Motor neuron (in vitro differentiated cells): ENCODE measurements at regions of chr10 and their contacts with region 1.

Region 1: GRCh38 chr10:120950051-120950561 is 98.9 kb downstream of the WDR11 start:
- ATAC-seq: peak in 5 of 8 experiments; percentile 8 to 49 (median 31)
- H3K4me3 ChIP-seq: peak overlapping the region in 2 of 5 donors; percentile 4 to 14
- H3K27ac ChIP-seq: no peak overlapping the region
- H3K4me1 ChIP-seq: peaks cover 4 to 9% of the 10 kb centered on the region in 2 donors

Region 2: GRCh38 chr10:120572307-120572706 is 377.8 kb before region 1 on chr10:
- in situ Hi-C with region 1: no loop called
- ATAC-seq: peak in 3 of 8 experiments; percentile 34 to 82 (median 60)
- H3K4me3 ChIP-seq: no peak overlapping the region
- H3K27ac ChIP-seq: no peak overlapping the region
- H3K4me1 ChIP-seq: no peaks in the 10 kb centered on the region

Region 3: GRCh38 chr10:121734589-121735045 is 784.5 kb after region 1 on chr10:
- in situ Hi-C with region 1: loop called in 4 of 9 experiments (anchors 10 to 25 kb)
- ATAC-seq: peak in 2 of 8 experiments; percentile 24 to 27
- H3K4me3 ChIP-seq: no peak overlapping the region
- H3K27ac ChIP-seq: no peak overlapping the region
- H3K4me1 ChIP-seq: peaks cover 19 to 20% of the 10 kb centered on the region in 2 donors